Caco-2 (cell line): ENCODE measurements at regions of chr11 and their contacts with region 1.

Region 1: GRCh38 chr11:86978756-86979608 is 23.8 kb upstream of the FZD4 start:
- DNase-seq: peak in 1 of 2 experiments; percentile 61
- H3K4me3 ChIP-seq: no peak overlapping the region
- H3K4me3 Mint-ChIP-seq: no peak overlapping the region
- H3K27ac Mint-ChIP-seq: no peak overlapping the region
- H3K4me1 ChIP-seq: peaks cover 10% of the 10 kb centered on the region
- H3K4me1 Mint-ChIP-seq: peaks cover 31% of the 10 kb centered on the region
- H3K27me3 ChIP-seq: no peaks in the 10 kb centered on the region
- H3K27me3 Mint-ChIP-seq: no peaks in the 10 kb centered on the region
- CTCF ChIP-seq: peak; percentile 84 to 87

Region 2: GRCh38 chr11:86938900-86939880 is 39.8 kb before region 1 on chr11:
- CTCF ChIA-PET with region 1: no interaction called
- POLR2A ChIA-PET with region 1: no interaction called
- intact Hi-C with region 1: loop called (anchors 2 kb)
- DNase-seq: peak in 1 of 2 experiments; percentile 75
- H3K4me3 ChIP-seq: no peak overlapping the region
- H3K4me3 Mint-ChIP-seq: peak overlapping the region; percentile 60
- H3K27ac Mint-ChIP-seq: peak overlapping the region; percentile 84
- H3K4me1 ChIP-seq: peaks cover 51% of the 10 kb centered on the region
- H3K4me1 Mint-ChIP-seq: peaks cover 52% of the 10 kb centered on the region
- H3K27me3 ChIP-seq: no peaks in the 10 kb centered on the region
- H3K27me3 Mint-ChIP-seq: no peaks in the 10 kb centered on the region
- CTCF ChIP-seq: peak; percentile 79 to 83

Region 3: DNA sequence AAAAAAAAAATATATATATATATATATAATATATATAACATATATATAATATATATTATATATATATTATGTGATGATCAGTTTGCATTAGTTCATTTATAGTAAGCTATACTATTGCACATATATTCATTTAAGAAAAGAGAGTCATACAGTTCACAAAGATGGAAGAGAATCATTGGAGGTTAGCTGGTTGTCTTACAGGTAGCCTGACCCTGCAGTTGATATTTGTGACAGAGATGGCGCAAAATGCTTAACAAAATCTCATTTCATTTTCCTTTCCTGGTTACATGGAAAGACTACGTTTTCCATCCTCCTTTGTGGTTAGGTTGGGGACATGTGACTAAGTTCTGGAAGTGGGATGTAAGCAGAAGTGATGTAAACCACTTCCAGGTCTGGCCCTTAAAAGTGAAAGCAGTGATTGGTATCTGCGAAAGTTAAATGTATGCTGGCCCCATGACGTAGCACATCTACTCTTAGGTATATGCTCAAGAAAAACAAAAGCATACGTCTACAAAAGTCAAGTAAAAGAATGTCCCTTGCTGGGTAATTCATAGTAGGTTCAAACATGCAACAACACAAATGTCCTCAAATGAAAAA is 51.6 kb after region 1 on chr11:
- CTCF ChIA-PET with region 1: no interaction called
- POLR2A ChIA-PET with region 1: no interaction called
- intact Hi-C with region 1: loop called (anchors 1 kb)
- DNase-seq: peak in 1 of 2 experiments; percentile 47
- H3K4me3 ChIP-seq: no peak overlapping the region
- H3K4me3 Mint-ChIP-seq: no peak overlapping the region
- H3K27ac Mint-ChIP-seq: no peak overlapping the region
- H3K4me1 ChIP-seq: peaks cover 25% of the 10 kb centered on the region
- H3K4me1 Mint-ChIP-seq: peaks cover 34% of the 10 kb centered on the region
- H3K27me3 ChIP-seq: no peaks in the 10 kb centered on the region
- H3K27me3 Mint-ChIP-seq: no peaks in the 10 kb centered on the region
- CTCF ChIP-seq: no peak

Region 4: GRCh38 chr11:87037450-87038234 is 58.7 kb after region 1 on chr11 and contains the start of gene TMEM135:
- CTCF ChIA-PET with region 1: interaction called, 11 read pairs
- POLR2A ChIA-PET with region 1: interaction called, 11 read pairs
- intact Hi-C with region 1: no loop called
- DNase-seq: peak; percentile 99 to 100
- H3K4me3 ChIP-seq: peak within 1 kb of the TSS; percentile 83
- H3K4me3 Mint-ChIP-seq: peak within 1 kb of the TSS; percentile 97
- H3K27ac Mint-ChIP-seq: peak within 1 kb of the TSS; percentile 81
- H3K4me1 ChIP-seq: peaks cover 11% of the 10 kb centered on the region
- H3K4me1 Mint-ChIP-seq: peaks cover 59% of the 10 kb centered on the region
- H3K27me3 ChIP-seq: no peaks in the 10 kb centered on the region
- H3K27me3 Mint-ChIP-seq: no peaks in the 10 kb centered on the region
- CTCF ChIP-seq: peak in 1 of 2 experiments; percentile 62
- total RNA-seq, gene TMEM135: 88.6 and 95.2 TPM in 2 replicates

Region 5: DNA sequence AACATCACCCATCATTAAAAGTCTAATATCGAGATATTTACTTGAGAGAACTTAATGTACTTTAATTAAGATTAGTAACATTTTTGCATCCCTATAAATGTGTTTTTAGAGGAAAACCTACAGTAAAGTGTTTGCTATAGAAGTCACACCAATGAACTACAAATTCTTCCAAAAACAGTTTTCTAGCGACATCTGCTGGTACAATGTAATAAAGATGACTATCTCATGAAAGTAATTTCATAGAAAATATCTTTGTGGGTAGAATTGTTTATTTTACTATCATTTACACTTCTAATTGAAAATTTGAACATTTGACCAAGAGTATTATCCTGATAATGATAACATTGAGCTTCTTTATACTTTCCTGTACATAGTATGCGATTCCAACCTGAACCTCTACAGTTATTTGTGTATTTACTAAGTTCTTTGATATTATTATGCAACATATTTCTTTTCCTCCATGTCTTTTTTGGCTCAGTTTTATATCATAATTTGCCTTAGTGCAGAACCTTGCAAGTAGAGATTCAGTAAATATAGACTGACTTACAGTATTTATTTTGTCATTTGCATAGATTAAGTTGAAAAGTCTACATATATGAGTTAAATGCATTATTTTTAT is 311.4 kb after region 1 on chr11:
- CTCF ChIA-PET with region 1: no interaction called
- POLR2A ChIA-PET with region 1: no interaction called
- intact Hi-C with region 1: loop called (anchors 1 kb)
- DNase-seq: peak in 1 of 2 experiments; percentile 76
- H3K4me3 ChIP-seq: no peak overlapping the region
- H3K4me3 Mint-ChIP-seq: no peak overlapping the region
- H3K27ac Mint-ChIP-seq: no peak overlapping the region
- H3K4me1 ChIP-seq: no peaks in the 10 kb centered on the region
- H3K4me1 Mint-ChIP-seq: peaks cover 5% of the 10 kb centered on the region
- H3K27me3 ChIP-seq: no peaks in the 10 kb centered on the region
- H3K27me3 Mint-ChIP-seq: no peaks in the 10 kb centered on the region
- CTCF ChIP-seq: peak; percentile 78 to 84

Region 6: GRCh38 chr11:87892291-87892690 is 913.3 kb after region 1 on chr11:
- CTCF ChIA-PET with region 1: no interaction called
- POLR2A ChIA-PET with region 1: no interaction called
- intact Hi-C with region 1: loop called (anchors 10 kb)
- DNase-seq: no peak
- H3K4me3 ChIP-seq: no peak overlapping the region
- H3K4me3 Mint-ChIP-seq: no peak overlapping the region
- H3K27ac Mint-ChIP-seq: no peak overlapping the region
- H3K4me1 ChIP-seq: peaks cover 8% of the 10 kb centered on the region
- H3K4me1 Mint-ChIP-seq: peaks cover 13% of the 10 kb centered on the region
- H3K27me3 ChIP-seq: no peaks in the 10 kb centered on the region
- H3K27me3 Mint-ChIP-seq: no peaks in the 10 kb centered on the region
- CTCF ChIP-seq: no peak